ENCODE measurements at regions of chr19 and their contacts with region 1.

Region 1: DNA sequence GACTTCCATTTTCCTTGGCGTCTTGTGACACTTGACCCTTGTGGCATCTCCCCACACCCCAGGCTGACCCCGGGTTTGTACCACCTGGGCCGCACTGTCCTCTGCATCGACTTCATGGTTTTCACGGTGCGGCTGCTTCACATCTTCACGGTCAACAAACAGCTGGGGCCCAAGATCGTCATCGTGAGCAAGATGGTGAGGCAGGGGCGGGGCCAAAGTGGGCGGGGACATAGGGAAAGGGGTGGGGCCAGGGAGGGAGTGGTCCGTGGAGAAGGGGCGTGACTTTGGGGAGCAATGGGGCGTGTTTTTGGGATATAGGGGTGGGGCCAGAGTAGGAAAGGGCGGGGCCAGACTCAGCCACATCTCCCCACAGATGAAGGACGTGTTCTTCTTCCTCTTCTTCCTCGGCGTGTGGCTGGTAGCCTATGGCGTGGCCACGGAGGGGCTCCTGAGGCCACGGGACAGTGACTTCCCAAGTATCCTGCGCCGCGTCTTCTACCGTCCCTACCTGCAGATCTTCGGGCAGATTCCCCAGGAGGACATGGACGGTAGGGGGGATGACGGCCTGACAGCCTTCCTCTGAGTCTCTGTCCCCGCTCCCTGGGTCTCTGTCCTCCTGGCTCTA is 42.8 kb downstream of the TRPM4 start:
- DNase-seq: no peak
- ATAC-seq: peak; percentile 92
- H3K4me3 ChIP-seq: no peak overlapping the region
- H3K27ac ChIP-seq: no peak overlapping the region
- H3K4me1 ChIP-seq: peaks cover 0 to 3% of the 10 kb centered on the region in 2 experiments; a peak in 1 of 4 replicates
- H3K27me3 ChIP-seq: no peaks in the 10 kb centered on the region
- CTCF ChIP-seq: no peak
- POLR2A ChIP-seq: no peak
- RAD21 ChIP-seq: no peak

Region 2: GRCh38 chr19:49097455-49098288 is 102.7 kb before region 1 on chr19:
- CTCF ChIA-PET with region 1: interaction called, 41 read pairs
- POLR2A ChIA-PET with region 1: no interaction called
- RAD21 ChIA-PET with region 1: interaction called, 3 to 5 read pairs
- intact Hi-C with region 1: loop called (anchors 2 kb)
- DNase-seq: peak; percentile 50
- ATAC-seq: peak; percentile 82
- H3K4me3 ChIP-seq: no peak overlapping the region
- H3K27ac ChIP-seq: 0 out of 2 replicates have a peak overlapping the region, but pooled peaks have one; percentile 8
- H3K4me1 ChIP-seq: peaks cover 0 to 3% of the 10 kb centered on the region in 2 experiments; a peak in 2 of 4 replicates
- H3K27me3 ChIP-seq: no peaks in the 10 kb centered on the region
- CTCF ChIP-seq: peak; percentile 81 to 100 (median 100)
- POLR2A ChIP-seq: no peak
- RAD21 ChIP-seq: peak; percentile 87

Region 3: DNA sequence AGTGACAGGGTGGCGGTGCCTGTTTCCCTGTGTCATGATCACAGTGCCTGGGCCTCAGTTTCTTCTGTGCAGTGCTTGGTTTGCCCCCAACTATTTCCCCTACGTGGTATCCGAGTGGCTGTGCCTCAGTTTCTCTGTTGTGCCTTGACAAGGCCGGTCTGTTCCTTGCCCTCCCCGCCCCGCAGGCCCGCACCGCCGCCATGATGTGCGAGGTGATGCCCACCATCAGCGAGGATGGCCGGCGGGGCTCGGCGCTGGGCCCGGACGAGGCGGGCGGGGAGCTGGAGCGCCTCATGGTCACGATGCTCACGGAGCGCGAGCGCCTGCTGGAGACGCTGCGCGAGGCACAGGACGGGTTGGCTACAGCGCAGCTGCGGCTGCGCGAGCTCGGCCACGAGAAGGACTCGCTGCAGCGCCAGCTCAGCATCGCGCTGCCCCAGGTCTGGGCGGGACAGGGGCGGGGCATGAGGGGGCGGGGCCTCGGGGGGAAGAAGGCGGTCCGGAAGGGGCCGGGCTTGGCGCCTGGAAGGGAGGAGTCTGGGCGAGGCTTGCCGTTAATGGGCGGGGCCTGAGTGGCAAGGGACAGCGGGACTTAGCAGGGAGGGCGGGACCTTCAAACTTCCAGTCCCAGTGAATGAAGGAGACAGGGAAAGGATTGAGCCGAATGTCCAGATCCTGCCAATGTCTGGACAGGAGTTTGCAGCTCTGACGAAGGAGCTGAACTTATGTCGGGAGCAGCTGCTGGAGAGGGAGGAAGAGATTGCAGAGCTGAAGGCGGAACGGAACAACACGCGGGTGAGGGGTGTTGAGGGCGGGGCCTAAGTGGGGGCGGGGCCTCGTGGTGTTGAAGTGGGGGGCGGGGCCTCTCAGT is 72.4 kb before region 1 on chr19:
- CTCF ChIA-PET with region 1: interaction called, 17 read pairs
- POLR2A ChIA-PET with region 1: no interaction called
- RAD21 ChIA-PET with region 1: no interaction called
- intact Hi-C with region 1: no loop called
- DNase-seq: peak; percentile 95
- ATAC-seq: peak; percentile 94
- H3K4me3 ChIP-seq: peak overlapping the region; percentile 40 to 60
- H3K27ac ChIP-seq: peak overlapping the region; percentile 60
- H3K4me1 ChIP-seq: peaks cover 12 to 21% of the 10 kb centered on the region in 2 experiments
- H3K27me3 ChIP-seq: no peaks in the 10 kb centered on the region
- CTCF ChIP-seq: 0 out of 6 replicates have a peak, but pooled peaks of 1 of the 3 experiments have one; percentile 10
- POLR2A ChIP-seq: no peak
- RAD21 ChIP-seq: no peak

Region 4: DNA sequence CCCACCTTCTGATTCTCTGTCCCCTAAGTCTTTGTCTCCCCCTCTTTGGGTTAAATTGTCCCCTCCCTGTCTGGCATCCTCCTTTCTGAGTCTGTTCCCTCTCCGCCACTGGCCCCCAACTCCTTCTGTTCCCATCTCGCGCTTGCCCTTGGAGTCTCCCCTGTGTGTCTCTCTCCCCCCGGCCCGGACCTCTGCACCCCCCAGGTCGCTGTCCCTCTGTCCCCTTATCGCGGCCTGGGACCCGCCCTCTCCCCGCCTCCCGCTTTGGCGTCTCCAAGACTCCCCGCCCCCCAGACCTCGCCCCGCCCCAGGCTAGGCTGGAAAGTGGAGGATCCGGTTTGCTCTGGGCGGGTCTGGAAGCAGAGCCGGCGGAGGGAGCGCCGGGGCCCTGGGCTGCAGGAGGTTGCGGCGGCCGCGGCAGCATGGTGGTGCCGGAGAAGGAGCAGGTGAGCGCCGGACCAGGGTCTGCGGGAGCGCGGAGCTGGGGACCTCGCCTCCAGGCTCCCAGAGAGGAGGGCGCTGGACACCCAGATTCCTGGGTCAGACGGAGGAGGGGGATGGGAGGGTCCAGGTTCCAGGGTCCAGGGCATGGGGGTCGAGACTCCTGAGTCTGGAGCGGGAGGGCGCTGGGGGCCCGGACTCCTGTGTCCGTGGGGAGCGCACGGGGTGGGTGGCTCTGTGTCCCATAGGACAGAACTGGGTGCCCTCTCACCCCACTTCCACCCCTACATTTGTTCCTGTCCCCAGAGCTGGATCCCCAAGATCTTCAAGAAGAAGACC is 42.7 kb before region 1 on chr19 and contains the start of gene TRPM4:
- CTCF ChIA-PET with region 1: interaction called, 5 read pairs
- POLR2A ChIA-PET with region 1: interaction called, 5 read pairs
- RAD21 ChIA-PET with region 1: no interaction called
- intact Hi-C with region 1: loop called (anchors 2 kb)
- DNase-seq: peak; percentile 62
- ATAC-seq: peak; percentile 95
- H3K4me3 ChIP-seq: peak within 1 kb of the TSS; percentile 96 to 97
- H3K27ac ChIP-seq: peak within 1 kb of the TSS; percentile 90
- H3K4me1 ChIP-seq: peaks cover 9 to 24% of the 10 kb centered on the region in 2 experiments
- H3K27me3 ChIP-seq: no peaks in the 10 kb centered on the region
- CTCF ChIP-seq: no peak
- POLR2A ChIP-seq: peak; percentile 61
- RAD21 ChIP-seq: no peak
- total RNA-seq, gene TRPM4: 44.2 TPM

Region 5: GRCh38 chr19:49243129-49243528 is 42.8 kb after region 1 on chr19:
- CTCF ChIA-PET with region 1: no interaction called
- POLR2A ChIA-PET with region 1: no interaction called
- RAD21 ChIA-PET with region 1: no interaction called
- intact Hi-C with region 1: no loop called
- DNase-seq: no peak
- ATAC-seq: no peak
- H3K4me3 ChIP-seq: no peak overlapping the region
- H3K27ac ChIP-seq: no peak overlapping the region
- H3K4me1 ChIP-seq: no peaks in the 10 kb centered on the region
- H3K27me3 ChIP-seq: no peaks in the 10 kb centered on the region
- CTCF ChIP-seq: no peak
- POLR2A ChIP-seq: no peak
- RAD21 ChIP-seq: no peak

Region 6: DNA sequence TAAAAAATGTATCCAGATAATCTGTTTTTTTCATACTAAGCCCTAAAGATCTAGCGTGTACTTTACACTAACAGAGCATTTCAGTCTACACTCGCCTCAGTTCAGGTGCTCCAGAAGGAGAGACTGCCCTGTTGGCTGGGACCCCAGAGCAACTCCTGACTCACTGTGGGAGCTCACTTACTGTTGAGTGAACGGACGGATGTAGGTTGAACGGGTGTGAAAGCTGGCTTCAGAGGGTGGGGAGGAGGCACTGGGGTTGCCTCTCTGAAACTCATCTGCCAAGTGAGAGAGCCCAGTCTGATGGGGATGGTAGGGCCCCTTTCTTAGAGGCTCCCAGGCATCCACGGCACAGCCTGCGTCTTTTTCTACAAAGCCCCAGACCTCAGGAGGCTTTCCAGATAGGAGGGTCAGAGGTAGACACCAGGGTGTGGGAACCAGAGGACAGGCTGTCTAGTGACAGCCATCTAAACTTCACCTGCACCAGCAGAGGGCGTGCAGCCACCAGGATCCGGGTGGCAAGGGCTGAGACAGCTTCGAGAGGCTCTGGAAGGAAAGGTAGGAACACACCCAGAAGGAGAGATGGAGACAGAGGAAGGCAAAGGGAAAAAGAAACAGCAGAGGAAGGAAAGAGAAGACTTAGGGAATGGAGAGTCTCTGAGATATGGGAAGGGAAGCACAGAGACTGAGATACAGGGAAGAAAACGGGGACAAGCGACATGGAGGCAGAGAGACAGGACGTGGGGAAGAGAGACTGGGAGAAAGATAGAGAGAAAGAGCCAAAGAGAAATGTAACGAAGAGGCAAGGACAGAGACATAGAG is 191.4 kb after region 1 on chr19:
- CTCF ChIA-PET with region 1: no interaction called
- POLR2A ChIA-PET with region 1: no interaction called
- RAD21 ChIA-PET with region 1: no interaction called
- intact Hi-C with region 1: no loop called
- DNase-seq: peak; percentile 60
- ATAC-seq: peak; percentile 98
- H3K4me3 ChIP-seq: no peak overlapping the region
- H3K27ac ChIP-seq: no peak overlapping the region
- H3K4me1 ChIP-seq: peaks cover 3 to 10% of the 10 kb centered on the region in 2 experiments; a peak in 3 of 4 replicates
- H3K27me3 ChIP-seq: no peaks in the 10 kb centered on the region
- CTCF ChIP-seq: peak; percentile 91 to 97 (median 93)
- POLR2A ChIP-seq: no peak
- RAD21 ChIP-seq: peak; percentile 98

Measured in HCT116 (cell line).